H1 (cell line): ENCODE measurements at regions of chr7 and their contacts with region 1.

Region 1: DNA sequence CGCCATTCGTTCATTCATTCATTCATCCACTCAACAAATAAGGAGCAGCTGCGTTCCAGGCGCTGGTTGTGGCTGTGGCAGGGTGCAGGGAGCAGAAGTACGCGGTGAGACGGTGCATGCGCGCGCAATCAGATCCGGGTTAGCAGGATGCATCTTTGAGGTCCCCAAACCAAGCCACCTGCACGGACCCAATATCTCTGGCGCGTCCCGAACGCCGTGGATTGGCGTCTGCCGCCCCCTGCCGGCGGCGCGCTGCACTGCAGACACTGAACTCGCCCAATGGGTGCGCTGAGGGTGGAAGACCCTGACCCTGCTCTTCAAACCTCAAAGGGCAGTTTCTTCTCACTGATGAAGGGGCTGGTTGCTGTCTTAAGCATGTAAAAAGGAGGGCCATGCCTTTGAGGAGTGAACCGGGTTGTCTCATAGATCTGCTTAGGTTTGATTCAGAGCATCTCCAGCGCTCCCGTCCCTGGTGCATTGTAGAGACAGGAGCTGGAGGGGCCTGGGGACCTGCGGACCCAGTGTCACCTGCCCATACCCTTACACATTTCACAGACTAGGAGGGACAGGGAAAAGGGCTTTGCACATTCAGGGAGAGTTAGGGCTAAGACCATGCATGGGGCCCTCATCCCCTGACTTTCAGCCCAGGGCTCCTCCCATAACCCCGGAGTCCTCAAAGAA is 102.5 kb downstream of the RAMP3 start:
- DNase-seq: peak; percentile 41 to 98
- H3K4me3 ChIP-seq: no peak overlapping the region
- H3K27ac ChIP-seq: no peak overlapping the region
- H3K4me1 ChIP-seq: no peaks in the 10 kb centered on the region
- H3K27me3 ChIP-seq: peaks cover 0 to 3% (median 3%) of the 10 kb centered on the region in 4 experiments; a peak in 3 of 7 replicates
- CTCF ChIP-seq: peak; percentile 95 to 98 (median 97)
- EP300 ChIP-seq: no peak
- POLR2A ChIP-seq: no peak
- RAD21 ChIP-seq: peak; percentile 94 to 96

Region 2: DNA sequence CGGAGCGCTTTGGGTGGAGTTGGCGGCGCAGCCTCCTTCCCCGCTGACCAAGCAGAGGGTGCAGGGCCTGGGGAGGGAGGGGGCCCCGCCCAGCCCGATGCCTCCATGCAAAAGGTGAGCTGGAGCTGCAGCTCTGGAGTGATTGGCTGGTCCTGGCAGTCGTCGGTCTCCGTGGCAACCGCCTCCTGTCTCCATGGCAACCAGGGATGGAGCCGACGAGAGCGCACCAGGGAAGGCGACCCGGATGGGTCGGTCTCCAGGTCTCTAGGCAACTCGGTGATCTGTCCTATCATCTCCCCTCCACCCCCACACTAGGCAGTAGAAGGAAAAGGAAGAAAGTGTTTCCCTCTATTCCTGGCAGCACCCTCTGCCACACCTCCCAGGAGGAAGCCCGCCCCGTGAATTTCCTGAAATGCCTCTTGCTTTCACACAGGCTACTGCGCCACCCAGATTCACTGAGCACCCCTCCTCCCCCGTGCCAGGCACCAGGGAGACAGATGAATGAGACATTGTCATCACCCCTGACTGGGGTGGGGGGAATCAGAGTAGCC is 170.7 kb before region 1 on chr7:
- CTCF ChIA-PET with region 1: no interaction called
- POLR2A ChIA-PET with region 1: no interaction called
- DNase-seq: peak; percentile 73 to 97
- H3K4me3 ChIP-seq: peak overlapping the region; percentile 53 to 75 (median 57)
- H3K27ac ChIP-seq: no peak overlapping the region
- H3K4me1 ChIP-seq: peaks cover 2 to 11% (median 6%) of the 10 kb centered on the region in 4 experiments; a peak in 5 of 7 replicates
- H3K27me3 ChIP-seq: peaks cover 0 to 15% (median 10%) of the 10 kb centered on the region in 4 experiments; a peak in 5 of 7 replicates
- CTCF ChIP-seq: no peak
- EP300 ChIP-seq: no peak
- POLR2A ChIP-seq: no peak
- RAD21 ChIP-seq: no peak

Region 3: DNA sequence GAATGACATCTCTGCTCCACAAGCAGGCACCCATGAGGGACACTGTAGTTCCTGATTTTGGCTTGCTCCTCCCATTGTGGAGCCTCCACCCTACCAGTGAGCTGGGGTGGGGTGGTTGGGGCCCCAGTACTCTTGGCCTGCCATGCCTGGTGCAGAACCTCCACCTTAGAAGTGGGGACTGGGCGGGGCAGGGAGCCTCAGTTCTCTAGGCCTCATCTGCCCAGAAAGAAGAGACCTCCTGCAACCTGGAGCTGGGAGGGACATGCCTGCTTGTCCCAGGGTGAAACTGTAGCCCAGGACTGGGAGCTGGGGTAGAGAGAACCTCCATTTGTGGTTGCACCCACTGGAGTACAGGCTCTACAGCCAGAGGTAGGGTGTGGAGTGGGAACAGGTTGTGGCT is 88.2 kb before region 1 on chr7:
- CTCF ChIA-PET with region 1: interaction called, 11 read pairs
- POLR2A ChIA-PET with region 1: no interaction called
- DNase-seq: no peak
- H3K4me3 ChIP-seq: no peak overlapping the region
- H3K27ac ChIP-seq: no peak overlapping the region
- H3K4me1 ChIP-seq: no peaks in the 10 kb centered on the region
- H3K27me3 ChIP-seq: no peaks in the 10 kb centered on the region
- CTCF ChIP-seq: no peak
- EP300 ChIP-seq: no peak
- POLR2A ChIP-seq: no peak
- RAD21 ChIP-seq: no peak

Region 4: GRCh38 chr7:45203936-45204445 is 56.1 kb before region 1 on chr7:
- CTCF ChIA-PET with region 1: interaction called, 10 read pairs
- POLR2A ChIA-PET with region 1: no interaction called
- DNase-seq: no peak
- H3K4me3 ChIP-seq: no peak overlapping the region
- H3K27ac ChIP-seq: no peak overlapping the region
- H3K4me1 ChIP-seq: no peaks in the 10 kb centered on the region
- H3K27me3 ChIP-seq: no peaks in the 10 kb centered on the region
- CTCF ChIP-seq: no peak
- EP300 ChIP-seq: no peak
- POLR2A ChIP-seq: no peak
- RAD21 ChIP-seq: no peak

Region 5: GRCh38 chr7:45229156-45229920 is 30.8 kb before region 1 on chr7:
- CTCF ChIA-PET with region 1: interaction called, 10 read pairs
- POLR2A ChIA-PET with region 1: no interaction called
- DNase-seq: peak in 1 of 2 experiments; percentile 43
- H3K4me3 ChIP-seq: no peak overlapping the region
- H3K27ac ChIP-seq: no peak overlapping the region
- H3K4me1 ChIP-seq: no peaks in the 10 kb centered on the region
- H3K27me3 ChIP-seq: no peaks in the 10 kb centered on the region
- CTCF ChIP-seq: no peak
- EP300 ChIP-seq: no peak
- POLR2A ChIP-seq: no peak
- RAD21 ChIP-seq: no peak

Region 6: DNA sequence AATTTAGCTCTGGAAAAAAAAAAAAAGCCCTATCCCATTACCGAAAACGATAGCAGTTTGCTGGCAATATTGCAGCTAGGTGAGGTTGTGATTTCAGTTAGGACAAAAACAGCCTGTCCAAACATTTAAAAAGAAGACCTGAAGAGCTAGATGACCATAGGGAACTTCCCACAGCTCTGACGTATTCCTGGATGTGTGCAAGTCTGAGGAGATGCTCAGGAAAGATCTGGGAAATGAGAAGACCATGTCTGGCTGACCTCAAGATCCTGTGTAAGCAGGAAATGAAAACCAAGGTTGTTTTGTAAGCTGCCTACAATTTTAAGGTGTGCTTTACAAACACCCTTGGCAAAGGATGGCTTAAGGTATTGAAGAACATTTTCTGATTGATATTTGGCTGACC is 13.8 kb before region 1 on chr7:
- CTCF ChIA-PET with region 1: interaction called, 20 read pairs
- POLR2A ChIA-PET with region 1: no interaction called
- DNase-seq: no peak
- H3K4me3 ChIP-seq: no peak overlapping the region
- H3K27ac ChIP-seq: no peak overlapping the region
- H3K4me1 ChIP-seq: no peaks in the 10 kb centered on the region; a peak in 1 of 7 replicates
- H3K27me3 ChIP-seq: no peaks in the 10 kb centered on the region
- CTCF ChIP-seq: no peak
- EP300 ChIP-seq: no peak
- POLR2A ChIP-seq: no peak
- RAD21 ChIP-seq: no peak

Region 7: GRCh38 chr7:45347804-45348412 is 87.8 kb after region 1 on chr7:
- CTCF ChIA-PET with region 1: no interaction called
- POLR2A ChIA-PET with region 1: no interaction called
- DNase-seq: peak in 1 of 2 experiments; percentile 17
- H3K4me3 ChIP-seq: no peak overlapping the region
- H3K27ac ChIP-seq: no peak overlapping the region
- H3K4me1 ChIP-seq: no peaks in the 10 kb centered on the region
- H3K27me3 ChIP-seq: no peaks in the 10 kb centered on the region
- CTCF ChIP-seq: no peak
- EP300 ChIP-seq: no peak
- POLR2A ChIP-seq: no peak
- RAD21 ChIP-seq: no peak